Aorta (tissue), 5 donors: ENCODE measurements at regions of chr7 and their contacts with region 1.

Region 1: DNA sequence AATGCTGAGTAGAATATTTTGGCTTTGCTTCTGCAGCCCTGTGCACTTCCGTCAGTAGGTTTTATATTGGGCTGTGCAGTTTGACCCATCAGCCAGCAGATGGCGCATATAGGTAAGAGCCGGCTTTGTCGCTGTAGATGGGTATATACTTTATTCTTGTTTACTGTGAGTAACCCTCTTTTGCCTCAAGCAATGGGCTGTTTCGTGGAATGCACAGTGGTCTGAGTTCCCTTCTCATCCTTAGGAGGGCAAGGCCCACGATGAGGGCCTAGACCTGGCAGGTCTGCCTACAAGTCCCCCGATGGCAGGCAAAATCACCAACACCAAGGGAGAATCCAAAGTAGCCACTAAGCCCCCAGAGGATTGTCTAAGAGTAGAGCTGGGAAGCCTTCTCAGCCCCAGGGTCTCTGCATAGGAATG is 1002.9 kb upstream of the KCND2 start:
- DNase-seq: peak; percentile 48 to 69
- ATAC-seq: peak; percentile 63
- H3K4me3 ChIP-seq: no peak overlapping the region
- H3K27ac ChIP-seq: no peak overlapping the region
- H3K4me1 ChIP-seq: no peaks in the 10 kb centered on the region
- H3K27me3 ChIP-seq: no peaks in the 10 kb centered on the region

Region 2: GRCh38 chr7:118626739-118627138 is 643.3 kb before region 1 on chr7:
- intact Hi-C with region 1: no loop called
- DNase-seq: no peak
- ATAC-seq: no peak
- H3K4me3 ChIP-seq: no peak overlapping the region
- H3K27ac ChIP-seq: no peak overlapping the region
- H3K4me1 ChIP-seq: no peaks in the 10 kb centered on the region
- H3K27me3 ChIP-seq: no peaks in the 10 kb centered on the region

Region 3: GRCh38 chr7:120554960-120555571 is 1285.0 kb after region 1 on chr7:
- intact Hi-C with region 1: loop called in 1 of 2 experiments (anchors 10 kb)
- DNase-seq: no peak
- ATAC-seq: no peak
- H3K4me3 ChIP-seq: no peak overlapping the region
- H3K27ac ChIP-seq: no peak overlapping the region
- H3K4me1 ChIP-seq: no peaks in the 10 kb centered on the region
- H3K27me3 ChIP-seq: peaks cover 0 to 3% of the 10 kb centered on the region in 2 donors